ENCODE measurements at regions of chr18 and their contacts with region 1.

Region 1: GRCh38 chr18:293536-293935 is 25.7 kb upstream of the THOC1 start:
- DNase-seq: no peak
- H3K4me3 ChIP-seq: no peak overlapping the region
- H3K4me3 Mint-ChIP-seq: no peak overlapping the region
- H3K27ac ChIP-seq: no peak overlapping the region
- H3K27ac Mint-ChIP-seq: no peak overlapping the region
- H3K4me1 ChIP-seq: no peaks in the 10 kb centered on the region
- H3K4me1 Mint-ChIP-seq: no peaks in the 10 kb centered on the region
- H3K27me3 ChIP-seq: no peaks in the 10 kb centered on the region
- H3K27me3 Mint-ChIP-seq: peaks cover 10 to 21% of the 10 kb centered on the region in 2 donors

Region 2: DNA sequence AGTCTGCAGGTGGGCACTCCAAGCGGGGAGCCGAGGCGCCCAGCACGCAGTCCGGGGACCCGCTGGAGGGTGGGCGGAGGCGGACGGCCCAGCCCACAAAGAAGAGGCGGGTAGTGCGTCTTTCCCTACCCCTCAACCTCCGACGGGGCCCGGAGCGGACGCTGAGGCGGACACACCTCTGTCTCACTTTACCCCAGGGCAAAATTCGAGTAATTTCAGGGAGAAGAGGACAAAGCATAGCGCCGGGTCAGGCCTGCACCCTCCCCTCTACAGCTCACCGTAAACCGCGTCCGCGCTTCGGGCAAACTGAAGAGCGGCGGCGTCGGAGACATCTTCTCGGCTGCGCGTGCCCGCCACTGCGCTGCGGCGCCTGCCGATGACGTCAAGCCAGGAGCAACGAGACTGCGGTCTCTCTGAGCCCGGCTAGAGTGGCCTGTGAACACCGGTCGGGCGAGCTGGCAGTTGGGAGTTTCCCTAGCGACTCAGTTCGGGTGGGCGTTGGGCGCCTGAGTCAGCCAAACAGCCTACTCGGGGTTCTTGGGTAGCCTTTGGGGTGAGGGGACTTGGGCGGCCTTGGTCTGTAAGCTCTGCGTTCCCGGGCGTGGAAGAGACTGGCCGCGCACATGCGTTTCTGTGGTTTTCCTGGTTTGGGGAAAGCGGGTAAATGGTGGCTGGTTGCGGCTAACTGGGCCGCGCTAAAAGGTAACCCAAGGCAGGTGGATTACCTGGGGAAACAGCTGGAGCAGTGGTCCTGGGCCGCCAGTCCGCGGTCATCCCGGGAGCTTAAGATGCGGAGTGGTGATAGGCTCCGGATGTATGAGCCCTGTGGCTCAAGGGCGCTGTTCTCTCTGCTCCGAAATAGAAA is 25.6 kb before region 1 on chr18 and contains the start of gene THOC1:
- CTCF ChIA-PET with region 1: no interaction called
- POLR2A ChIA-PET with region 1: interaction called, 11 read pairs
- DNase-seq: peak; percentile 89 to 96 (median 92)
- H3K4me3 ChIP-seq: peak within 1 kb of the TSS; percentile 98
- H3K4me3 Mint-ChIP-seq: peak within 1 kb of the TSS; percentile 98 to 100 (median 100)
- H3K27ac ChIP-seq: peak within 1 kb of the TSS; percentile 99
- H3K27ac Mint-ChIP-seq: peak within 1 kb of the TSS; percentile 99 to 100 (median 100)
- H3K4me1 ChIP-seq: peaks cover 24% of the 10 kb centered on the region
- H3K4me1 Mint-ChIP-seq: peaks cover 33 to 49% (median 38%) of the 10 kb centered on the region in 3 donors
- H3K27me3 ChIP-seq: no peaks in the 10 kb centered on the region
- H3K27me3 Mint-ChIP-seq: no peaks in the 10 kb centered on the region
- total RNA-seq, gene THOC1: 51.8 to 54.6 TPM

Region 3: DNA sequence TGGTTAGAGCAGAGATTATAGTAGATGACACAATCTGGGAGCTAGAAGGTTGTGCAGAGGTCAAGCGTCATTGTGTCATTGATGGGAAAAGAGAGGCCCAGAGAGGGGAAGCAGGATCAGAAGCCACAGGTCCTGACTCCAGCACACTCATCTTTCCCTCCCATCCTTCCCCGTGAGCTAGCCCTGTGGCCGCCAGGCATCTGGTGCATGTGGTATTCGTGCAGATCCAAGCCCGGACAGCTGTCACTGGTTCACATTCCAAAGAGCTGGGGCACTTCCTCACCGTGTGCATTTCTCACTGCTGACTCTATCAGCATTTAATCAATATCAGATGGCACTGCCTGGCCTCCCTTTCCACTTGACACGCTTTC is 68.4 kb after region 1 on chr18:
- CTCF ChIA-PET with region 1: no interaction called
- POLR2A ChIA-PET with region 1: no interaction called
- DNase-seq: no peak
- H3K4me3 ChIP-seq: no peak overlapping the region
- H3K4me3 Mint-ChIP-seq: no peak overlapping the region
- H3K27ac ChIP-seq: no peak overlapping the region
- H3K27ac Mint-ChIP-seq: no peak overlapping the region
- H3K4me1 ChIP-seq: no peaks in the 10 kb centered on the region
- H3K4me1 Mint-ChIP-seq: no peaks in the 10 kb centered on the region
- H3K27me3 ChIP-seq: no peaks in the 10 kb centered on the region
- H3K27me3 Mint-ChIP-seq: peaks cover 2 to 26% of the 10 kb centered on the region in 2 donors

Region 4: DNA sequence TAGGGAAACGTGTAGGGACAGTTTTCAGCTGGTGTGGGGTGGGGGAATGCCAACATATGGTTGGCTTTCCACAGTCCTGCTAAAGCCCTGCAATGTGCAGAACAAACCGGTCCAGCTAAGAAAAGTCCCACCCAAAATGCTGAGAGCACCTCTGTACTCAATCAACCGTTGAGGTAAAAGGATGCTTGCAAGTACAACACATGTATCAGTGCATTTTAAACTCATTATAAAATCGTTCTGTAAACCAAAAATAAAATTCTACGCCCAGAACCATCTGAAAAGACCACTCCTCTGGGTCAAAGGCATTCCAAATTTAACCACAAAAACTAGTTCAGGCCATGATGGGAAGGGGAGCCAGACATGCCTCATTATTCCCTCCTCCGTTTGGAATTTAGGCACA is 361.9 kb after region 1 on chr18:
- CTCF ChIA-PET with region 1: no interaction called
- POLR2A ChIA-PET with region 1: interaction called, 12 read pairs
- DNase-seq: no peak
- H3K4me3 ChIP-seq: no peak overlapping the region
- H3K4me3 Mint-ChIP-seq: peak overlapping the region in 3 of 7 donors; percentile 7 to 48 (median 32)
- H3K27ac ChIP-seq: no peak overlapping the region
- H3K27ac Mint-ChIP-seq: no peak overlapping the region
- H3K4me1 ChIP-seq: peaks cover 4% of the 10 kb centered on the region
- H3K4me1 Mint-ChIP-seq: peaks cover 13 to 21% (median 14%) of the 10 kb centered on the region in 3 donors
- H3K27me3 ChIP-seq: peaks cover 6% of the 10 kb centered on the region
- H3K27me3 Mint-ChIP-seq: peaks cover 29 to 56% of the 10 kb centered on the region in 2 donors

Region 5: GRCh38 chr18:1446765-1447164 is 1153.2 kb after region 1 on chr18:
- CTCF ChIA-PET with region 1: no interaction called
- POLR2A ChIA-PET with region 1: no interaction called
- DNase-seq: no peak
- H3K4me3 ChIP-seq: no peak overlapping the region
- H3K4me3 Mint-ChIP-seq: no peak overlapping the region
- H3K27ac ChIP-seq: no peak overlapping the region
- H3K27ac Mint-ChIP-seq: no peak overlapping the region
- H3K4me1 ChIP-seq: no peaks in the 10 kb centered on the region
- H3K4me1 Mint-ChIP-seq: no peaks in the 10 kb centered on the region
- H3K27me3 ChIP-seq: no peaks in the 10 kb centered on the region
- H3K27me3 Mint-ChIP-seq: peaks cover 0 to 2% of the 10 kb centered on the region in 2 donors